K562 (cell line): ENCODE measurements at regions of chr12 and their contacts with region 1.

Region 1: DNA sequence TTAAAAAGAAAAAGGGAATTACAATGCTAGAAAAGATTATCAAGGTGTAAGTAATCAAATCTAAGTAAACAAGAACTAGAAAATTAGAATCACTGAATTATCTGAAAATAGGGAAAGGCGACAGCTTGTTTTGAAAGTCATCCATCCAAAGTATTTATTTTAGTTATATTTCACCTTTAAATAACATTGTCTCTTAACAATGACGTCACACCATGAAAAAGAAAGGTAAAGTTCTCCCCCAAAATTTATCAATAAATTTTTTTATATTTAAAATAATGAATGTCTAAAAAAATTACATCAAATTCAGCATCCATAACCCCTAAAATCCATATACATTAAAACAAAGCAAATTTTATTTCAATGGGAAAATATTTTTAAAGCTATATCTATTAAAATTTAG is 223.2 kb downstream of the RERGL start:
- DNase-seq: no peak
- ATAC-seq: no peak
- H3K4me3 ChIP-seq: no peak overlapping the region
- H3K27ac ChIP-seq: no peak overlapping the region
- H3K4me1 ChIP-seq: no peaks in the 10 kb centered on the region
- H3K27me3 ChIP-seq: no peaks in the 10 kb centered on the region
- CTCF ChIP-seq: no peak
- EP300 ChIP-seq: no peak
- POLR2A ChIP-seq: no peak
- RAD21 ChIP-seq: no peak

Region 2: DNA sequence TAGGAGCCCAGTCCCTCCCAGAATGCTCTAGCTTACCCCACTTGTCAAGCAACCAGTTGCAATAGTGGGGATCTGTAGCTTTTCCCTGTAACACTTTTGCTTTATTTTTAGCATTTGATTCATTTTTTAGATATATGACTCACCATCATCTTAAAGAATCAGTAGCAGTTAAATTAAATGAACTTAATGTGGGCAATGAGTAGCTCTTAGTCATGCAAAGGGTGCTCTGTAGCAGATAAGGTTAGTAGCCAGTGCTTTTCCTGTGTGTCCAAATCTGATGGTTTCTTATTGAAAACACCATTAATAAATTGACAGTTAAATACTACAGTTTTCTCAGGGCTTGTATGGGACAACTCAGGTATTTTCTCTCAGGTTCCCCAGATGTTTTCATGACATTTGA is 88.6 kb before region 1 on chr12:
- CTCF ChIA-PET with region 1: no interaction called
- POLR2A ChIA-PET with region 1: no interaction called
- in situ Hi-C with region 1: loop called (anchors 10 kb)
- intact Hi-C with region 1: loop called (anchors 5 kb)
- DNase-seq: no peak
- ATAC-seq: no peak
- H3K4me3 ChIP-seq: no peak overlapping the region
- H3K27ac ChIP-seq: no peak overlapping the region
- H3K4me1 ChIP-seq: no peaks in the 10 kb centered on the region
- H3K27me3 ChIP-seq: no peaks in the 10 kb centered on the region
- CTCF ChIP-seq: no peak
- EP300 ChIP-seq: no peak
- POLR2A ChIP-seq: no peak
- RAD21 ChIP-seq: no peak